Heart right ventricle (tissue), 16 donors: ENCODE measurements at regions of chr15 and their contacts with region 1.

Region 1: DNA sequence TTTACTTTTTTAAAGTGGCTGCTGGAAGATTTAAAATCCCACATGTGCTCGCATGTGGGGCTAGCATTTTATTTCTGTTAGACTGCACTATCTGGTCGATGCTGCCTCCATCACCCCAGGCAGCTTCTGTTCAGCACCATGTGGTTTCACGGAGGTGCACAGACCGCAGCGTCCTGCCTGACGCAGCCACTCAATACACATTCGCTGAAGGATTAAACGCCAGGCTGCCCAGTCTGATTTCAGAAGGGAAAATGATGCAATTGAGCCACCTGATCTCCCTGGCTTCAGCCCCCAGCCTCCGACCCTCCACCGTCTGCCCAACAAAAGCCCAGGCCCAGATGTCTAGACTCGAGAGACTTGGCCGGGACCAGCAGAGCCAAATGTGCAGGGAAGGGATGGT is 84.5 kb downstream of the MEGF11 start:
- DNase-seq: no peak
- ATAC-seq: no peak
- H3K4me3 ChIP-seq: no peak overlapping the region
- H3K27ac ChIP-seq: no peak overlapping the region
- H3K4me1 ChIP-seq: no peaks in the 10 kb centered on the region
- H3K27me3 ChIP-seq: peaks cover 0 to 16% (median 7%) of the 10 kb centered on the region in 7 donors
- CTCF ChIP-seq: no peak

Region 2: GRCh38 chr15:65532738-65533051 is 636.3 kb before region 1 on chr15:
- intact Hi-C with region 1: no loop called
- DNase-seq: no peak
- ATAC-seq: no peak
- H3K4me3 ChIP-seq: no peak overlapping the region
- H3K27ac ChIP-seq: no peak overlapping the region
- H3K4me1 ChIP-seq: peaks cover 0 to 22% (median 19%) of the 10 kb centered on the region in 9 donors
- H3K27me3 ChIP-seq: no peaks in the 10 kb centered on the region
- CTCF ChIP-seq: no peak

Region 3: DNA sequence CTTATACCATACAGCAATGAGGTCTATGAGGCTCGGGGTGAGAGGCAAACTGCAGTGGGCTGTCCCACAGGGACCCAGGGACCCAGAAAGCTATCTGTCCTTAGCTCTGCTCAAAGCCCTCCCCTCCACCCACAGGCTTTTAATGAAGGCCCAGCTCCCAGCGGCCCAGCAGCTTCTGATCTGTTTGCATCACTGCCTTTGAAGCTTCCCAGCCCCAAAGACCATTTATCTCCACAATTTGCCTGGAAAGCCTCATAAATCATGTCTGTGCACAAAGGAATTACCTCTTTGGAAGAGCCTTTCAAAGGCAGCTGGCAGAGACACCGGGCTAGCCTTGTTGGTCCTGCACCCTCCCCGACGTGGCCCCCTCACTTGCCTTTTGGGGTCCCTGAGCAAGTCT is 175.8 kb before region 1 on chr15:
- intact Hi-C with region 1: loop called in 1 of 10 experiments (anchors 10 kb)
- DNase-seq: no peak
- ATAC-seq: no peak
- H3K4me3 ChIP-seq: no peak overlapping the region
- H3K27ac ChIP-seq: no peak overlapping the region
- H3K4me1 ChIP-seq: no peaks in the 10 kb centered on the region
- H3K27me3 ChIP-seq: peaks cover 0 to 73% (median 40%) of the 10 kb centered on the region in 7 donors
- CTCF ChIP-seq: no peak

Region 4: GRCh38 chr15:66603301-66604179 is 434.5 kb after region 1 on chr15:
- intact Hi-C with region 1: loop called in 1 of 10 experiments (anchors 5 kb)
- DNase-seq: peak; percentile 60 to 71
- ATAC-seq: peak; percentile 68 to 93 (median 84)
- H3K4me3 ChIP-seq: no peak overlapping the region
- H3K27ac ChIP-seq: no peak overlapping the region
- H3K4me1 ChIP-seq: peaks cover 0 to 6% (median 0%) of the 10 kb centered on the region in 9 donors
- H3K27me3 ChIP-seq: no peaks in the 10 kb centered on the region
- CTCF ChIP-seq: peak; percentile 77 to 88 (median 84)